ENCODE measurements at regions of chr9 and their contacts with region 1.

Region 1: GRCh38 chr9:94676446-94677131 is 37.3 kb upstream of the FBP1 start:
- DNase-seq: no peak
- H3K4me3 ChIP-seq: no peak overlapping the region
- H3K27ac ChIP-seq: no peak overlapping the region
- H3K4me1 ChIP-seq: peaks cover 38% of the 10 kb centered on the region
- H3K27me3 ChIP-seq: no peaks in the 10 kb centered on the region
- CTCF ChIP-seq: no peak
- POLR2A ChIP-seq: no peak

Region 2: DNA sequence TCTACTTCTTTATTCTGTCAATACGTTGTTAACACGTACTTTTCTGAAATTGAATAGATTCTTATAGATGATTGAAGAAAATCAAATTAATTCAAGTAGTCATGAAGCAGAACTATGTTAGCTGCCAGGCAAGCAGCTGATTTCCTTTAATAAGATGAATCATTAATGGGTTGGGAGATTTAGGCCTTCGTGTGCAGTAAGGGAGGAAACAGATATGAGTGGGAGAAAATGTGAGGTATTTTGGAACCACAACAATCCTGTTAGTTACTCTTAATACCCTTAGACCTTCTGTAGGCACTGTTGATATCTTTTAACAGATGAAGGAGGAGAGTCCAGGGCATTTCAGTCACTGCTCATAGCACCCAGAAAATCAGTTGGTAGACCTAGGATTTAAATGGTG is 170.9 kb after region 1 on chr9:
- intact Hi-C with region 1: no loop called
- DNase-seq: no peak
- H3K4me3 ChIP-seq: no peak overlapping the region
- H3K27ac ChIP-seq: peak overlapping the region; percentile 31
- H3K4me1 ChIP-seq: peaks cover 11% of the 10 kb centered on the region
- H3K27me3 ChIP-seq: no peaks in the 10 kb centered on the region
- CTCF ChIP-seq: no peak
- POLR2A ChIP-seq: no peak

Region 3: GRCh38 chr9:95131023-95131943 is 454.7 kb after region 1 on chr9:
- intact Hi-C with region 1: loop called (anchors 1 kb)
- DNase-seq: peak in 1 of 2 donors; percentile 93
- H3K4me3 ChIP-seq: no peak overlapping the region
- H3K27ac ChIP-seq: peak overlapping the region; percentile 53
- H3K4me1 ChIP-seq: peaks cover 27% of the 10 kb centered on the region
- H3K27me3 ChIP-seq: no peaks in the 10 kb centered on the region
- CTCF ChIP-seq: peak; percentile 70 to 84 (median 82)
- POLR2A ChIP-seq: no peak